A673 (cell line): ENCODE measurements at regions of chr13 and their contacts with region 1.

Region 1: GRCh38 chr13:103328899-103329298 is 262.7 kb upstream of the SLC10A2 start:
- DNase-seq: no peak
- H3K4me3 ChIP-seq: no peak overlapping the region
- H3K27ac ChIP-seq: no peak overlapping the region
- H3K4me1 ChIP-seq: no peaks in the 10 kb centered on the region
- H3K27me3 ChIP-seq: peaks cover 24% of the 10 kb centered on the region
- CTCF ChIP-seq: peak; percentile 20; the same call in 1 of the 2 replicates

Region 2: DNA sequence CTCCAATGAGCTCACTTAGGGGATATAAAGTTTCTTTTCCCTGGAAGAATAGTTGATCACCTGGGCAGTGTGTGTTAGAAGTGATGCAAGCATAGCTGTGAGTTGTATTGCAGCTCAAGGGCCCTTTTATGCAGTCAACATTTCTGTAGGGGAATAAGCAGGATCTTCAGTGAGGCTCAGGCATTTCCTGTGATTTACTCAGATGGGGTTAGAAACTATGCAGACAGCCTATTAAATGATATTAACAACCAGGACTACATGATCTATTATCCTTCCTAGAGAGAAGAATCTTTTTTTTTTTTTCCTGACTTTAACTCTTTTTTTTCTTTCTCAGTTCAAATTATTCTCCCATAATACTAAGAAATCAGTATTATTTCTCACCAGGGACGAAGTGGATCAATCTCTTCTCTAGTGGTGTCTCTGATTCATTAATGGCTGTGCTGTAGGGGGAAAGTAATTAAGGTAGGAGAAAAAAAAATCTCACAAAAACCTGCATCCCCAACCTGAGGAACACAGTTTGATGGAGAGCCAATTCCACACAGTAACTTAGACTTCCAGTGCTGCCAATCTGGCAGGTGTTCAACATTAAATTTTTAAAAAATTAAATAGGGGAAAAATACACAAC is 136.3 kb before region 1 on chr13:
- CTCF ChIA-PET with region 1: no interaction called
- POLR2A ChIA-PET with region 1: no interaction called
- intact Hi-C with region 1: loop called (anchors 5 kb)
- DNase-seq: peak; percentile 1
- H3K4me3 ChIP-seq: no peak overlapping the region
- H3K27ac ChIP-seq: no peak overlapping the region
- H3K4me1 ChIP-seq: no peaks in the 10 kb centered on the region
- H3K27me3 ChIP-seq: peaks cover 24% of the 10 kb centered on the region
- CTCF ChIP-seq: no peak

Region 3: GRCh38 chr13:103403148-103403740 is 74.3 kb after region 1 on chr13:
- CTCF ChIA-PET with region 1: no interaction called
- POLR2A ChIA-PET with region 1: no interaction called
- intact Hi-C with region 1: no loop called
- DNase-seq: no peak
- H3K4me3 ChIP-seq: no peak overlapping the region
- H3K27ac ChIP-seq: no peak overlapping the region
- H3K4me1 ChIP-seq: no peaks in the 10 kb centered on the region
- H3K27me3 ChIP-seq: peaks cover 7% of the 10 kb centered on the region
- CTCF ChIP-seq: no peak

Region 4: DNA sequence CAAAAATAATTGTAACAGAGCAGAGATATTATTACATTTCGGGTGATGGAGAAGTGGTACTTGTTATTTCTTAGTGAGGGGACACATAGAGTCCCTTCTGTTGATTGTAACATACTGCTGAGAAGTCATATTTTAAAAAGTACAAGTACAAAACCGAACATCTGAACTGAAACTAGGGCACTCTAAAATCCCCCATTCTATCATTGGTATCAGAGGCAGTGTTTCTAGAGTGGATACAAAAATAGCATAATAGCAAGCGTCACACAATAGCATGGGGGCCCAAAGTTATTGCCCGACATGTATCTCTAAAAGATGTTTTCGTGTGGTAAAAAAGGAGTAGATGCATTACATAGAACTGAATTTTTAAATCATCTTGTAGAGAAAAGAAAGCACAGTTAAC is 239.4 kb after region 1 on chr13:
- CTCF ChIA-PET with region 1: no interaction called
- POLR2A ChIA-PET with region 1: no interaction called
- intact Hi-C with region 1: no loop called
- DNase-seq: no peak
- H3K4me3 ChIP-seq: no peak overlapping the region
- H3K27ac ChIP-seq: no peak overlapping the region
- H3K4me1 ChIP-seq: no peaks in the 10 kb centered on the region
- H3K27me3 ChIP-seq: no peaks in the 10 kb centered on the region
- CTCF ChIP-seq: no peak

Region 5: DNA sequence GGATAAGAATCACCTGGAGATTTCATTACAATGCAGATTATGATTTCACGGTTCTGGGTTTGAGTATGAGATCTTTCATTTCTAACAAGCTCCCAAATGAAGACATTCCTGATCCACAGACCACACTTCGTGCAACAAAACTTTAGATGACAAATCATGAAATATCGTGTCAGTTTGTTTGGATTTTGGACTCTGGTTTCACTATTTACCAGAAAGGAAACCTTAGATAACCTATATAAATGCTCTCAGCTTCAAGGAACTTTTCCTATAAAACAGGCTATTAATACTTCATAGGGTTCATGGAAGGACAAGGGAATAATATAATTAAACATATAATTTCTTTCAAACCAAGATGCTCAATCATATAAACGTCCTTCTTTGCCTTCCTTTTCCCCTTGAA is 667.8 kb after region 1 on chr13:
- CTCF ChIA-PET with region 1: no interaction called
- POLR2A ChIA-PET with region 1: no interaction called
- intact Hi-C with region 1: no loop called
- DNase-seq: no peak
- H3K4me3 ChIP-seq: no peak overlapping the region
- H3K27ac ChIP-seq: no peak overlapping the region
- H3K4me1 ChIP-seq: no peaks in the 10 kb centered on the region
- H3K27me3 ChIP-seq: no peaks in the 10 kb centered on the region
- CTCF ChIP-seq: no peak